Adrenal gland (tissue), 19 donors: ENCODE measurements at regions of chr3 and their contacts with region 1.

Region 1: GRCh38 chr3:105686278-105686897 is 182.4 kb downstream of the CBLB start:
- DNase-seq: no peak
- H3K4me3 ChIP-seq: no peak overlapping the region
- H3K27ac ChIP-seq: no peak overlapping the region
- H3K4me1 ChIP-seq: peaks cover 0 to 9% of the 10 kb centered on the region in 2 donors
- H3K27me3 ChIP-seq: no peaks in the 10 kb centered on the region
- CTCF ChIP-seq: peak; percentile 51 to 87 (median 70)
- POLR2A ChIP-seq: no peak

Region 2: GRCh38 chr3:105868742-105869530 is 182.5 kb after region 1 on chr3 and contains the start of gene CBLB:
- intact Hi-C with region 1: loop called in 1 of 2 experiments (anchors 5 kb)
- DNase-seq: peak; percentile 91 to 98 (median 96)
- H3K4me3 ChIP-seq: peak within 1 kb of the TSS; percentile 62 to 92 (median 78)
- H3K27ac ChIP-seq: peak within 1 kb of the TSS; percentile 80 to 98 (median 96)
- H3K4me1 ChIP-seq: peaks cover 25 to 39% of the 10 kb centered on the region in 2 donors
- H3K27me3 ChIP-seq: no peaks in the 10 kb centered on the region
- CTCF ChIP-seq: no peak
- POLR2A ChIP-seq: peak; percentile 78 to 84
- total RNA-seq, gene CBLB: 23.4 to 58.9 (median 37.0) TPM

Region 3: GRCh38 chr3:106609666-106610301 is 923.4 kb after region 1 on chr3:
- intact Hi-C with region 1: loop called (anchors 10 kb)
- DNase-seq: peak; percentile 57 to 87 (median 70)
- H3K4me3 ChIP-seq: no peak overlapping the region
- H3K27ac ChIP-seq: no peak overlapping the region
- H3K4me1 ChIP-seq: no peaks in the 10 kb centered on the region
- H3K27me3 ChIP-seq: no peaks in the 10 kb centered on the region
- CTCF ChIP-seq: peak; percentile 84 to 90 (median 87)
- POLR2A ChIP-seq: no peak